Calu3 (cell line): ENCODE measurements at regions of chr2 and their contacts with region 1.

Region 1: GRCh38 chr2:113876503-113877387 is 13.1 kb upstream of the ACTR3 start:
- DNase-seq: peak; percentile 95
- H3K4me3 Mint-ChIP-seq: peak overlapping the region; percentile 56
- H3K27ac Mint-ChIP-seq: peak overlapping the region; percentile 91
- H3K4me1 Mint-ChIP-seq: peaks cover 45% of the 10 kb centered on the region
- H3K27me3 Mint-ChIP-seq: peaks cover 12% of the 10 kb centered on the region
- CTCF ChIP-seq: no peak

Region 2: DNA sequence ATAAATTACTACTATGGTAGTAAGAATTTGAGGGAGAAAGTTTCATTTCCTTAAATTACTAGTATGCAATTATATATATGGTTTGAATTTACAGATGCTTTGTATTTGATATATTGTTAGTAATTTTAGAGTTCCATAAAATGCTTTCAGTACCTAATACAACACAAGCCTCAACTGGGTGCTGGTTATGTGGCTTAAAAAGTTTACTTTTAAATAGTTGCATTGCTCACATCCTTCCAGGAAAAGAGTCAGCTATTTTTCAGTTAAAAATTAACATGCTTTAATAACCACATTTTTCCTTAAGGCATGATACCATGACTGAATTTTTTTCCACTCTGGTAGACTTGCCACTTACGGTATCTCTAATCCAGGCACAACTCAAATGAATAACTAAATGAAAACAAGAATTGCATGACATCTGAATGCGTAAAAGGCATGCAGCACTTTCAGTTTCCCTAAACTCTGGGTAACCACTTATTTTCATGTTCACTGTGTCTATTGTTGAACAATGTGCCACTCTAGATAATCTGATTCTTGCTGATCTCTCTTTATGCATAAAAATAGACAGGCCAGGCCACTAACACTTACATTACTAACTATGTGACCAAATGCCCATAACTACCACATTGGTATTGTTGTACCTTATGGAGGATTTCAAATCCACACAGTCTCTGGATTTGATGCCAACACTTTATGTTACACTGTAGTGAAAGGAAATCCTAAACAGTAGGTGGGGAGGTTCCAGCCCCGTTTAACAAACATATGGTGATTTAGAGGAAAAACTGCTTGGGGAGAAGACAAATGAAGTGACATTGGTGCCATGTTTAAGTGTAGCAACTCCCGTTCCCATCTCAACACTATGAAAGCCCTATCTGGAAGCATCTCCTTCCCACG is 84.8 kb before region 1 on chr2:
- CTCF ChIA-PET with region 1: no interaction called
- intact Hi-C with region 1: loop called (anchors 5 kb)
- DNase-seq: no peak
- H3K4me3 Mint-ChIP-seq: no peak overlapping the region
- H3K27ac Mint-ChIP-seq: peak overlapping the region; percentile 90
- H3K4me1 Mint-ChIP-seq: peaks cover 38% of the 10 kb centered on the region
- H3K27me3 Mint-ChIP-seq: no peaks in the 10 kb centered on the region
- CTCF ChIP-seq: no peak

Region 3: GRCh38 chr2:113980946-113981345 is 104.2 kb after region 1 on chr2:
- CTCF ChIA-PET with region 1: no interaction called
- intact Hi-C with region 1: no loop called
- DNase-seq: no peak
- H3K4me3 Mint-ChIP-seq: no peak overlapping the region
- H3K27ac Mint-ChIP-seq: peak overlapping the region; percentile 80
- H3K4me1 Mint-ChIP-seq: peaks cover 40% of the 10 kb centered on the region
- H3K27me3 Mint-ChIP-seq: no peaks in the 10 kb centered on the region
- CTCF ChIP-seq: no peak